ENCODE measurements at regions of chr10 and their contacts with region 1.

Region 1: GRCh38 chr10:61866700-61867368 is 34.7 kb upstream of the ARID5B start:
- DNase-seq: no peak
- ATAC-seq: no peak
- H3K4me3 Mint-ChIP-seq: peak overlapping the region; percentile 64 to 89 (median 75)
- H3K27ac Mint-ChIP-seq: peak overlapping the region in 8 of 10 donors; percentile 12 to 82 (median 76)
- H3K4me1 Mint-ChIP-seq: peaks cover 0 to 11% (median 2%) of the 10 kb centered on the region in 4 donors
- H3K27me3 Mint-ChIP-seq: no peaks in the 10 kb centered on the region

Region 2: GRCh38 chr10:61750929-61751471 is 115.8 kb before region 1 on chr10:
- POLR2A ChIA-PET with region 1: interaction called, 10 read pairs
- DNase-seq: peak; percentile 30 to 81 (median 46)
- ATAC-seq: peak; percentile 90 to 94
- H3K4me3 Mint-ChIP-seq: peak overlapping the region in 1 of 10 donors; percentile 27
- H3K27ac Mint-ChIP-seq: peak overlapping the region in 1 of 10 donors; percentile 72
- H3K4me1 Mint-ChIP-seq: peaks cover 5 to 29% (median 21%) of the 10 kb centered on the region in 4 donors
- H3K27me3 Mint-ChIP-seq: no peaks in the 10 kb centered on the region

Region 3: DNA sequence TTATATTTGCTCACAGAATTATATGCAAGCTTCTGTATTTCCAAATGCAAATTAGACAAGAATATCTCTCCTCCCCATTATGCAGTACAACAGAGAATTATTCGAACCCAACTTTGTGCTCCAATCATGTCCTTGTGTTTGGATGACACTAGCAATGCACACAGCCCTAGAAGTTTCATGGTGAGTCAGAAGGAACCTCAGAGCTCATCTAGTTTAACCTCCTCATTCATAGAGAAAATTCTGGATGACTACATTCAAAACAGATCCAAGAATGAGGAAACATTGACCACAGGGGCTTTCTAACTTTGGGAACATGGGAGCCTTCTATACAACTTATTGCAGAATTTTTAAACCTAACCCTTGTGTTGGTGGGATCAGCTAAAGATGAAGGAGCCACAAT is 21.9 kb after region 1 on chr10:
- POLR2A ChIA-PET with region 1: no interaction called
- DNase-seq: no peak
- ATAC-seq: no peak
- H3K4me3 Mint-ChIP-seq: no peak overlapping the region
- H3K27ac Mint-ChIP-seq: no peak overlapping the region
- H3K4me1 Mint-ChIP-seq: no peaks in the 10 kb centered on the region
- H3K27me3 Mint-ChIP-seq: peaks cover 0 to 5% (median 1%) of the 10 kb centered on the region in 5 donors

Region 4: GRCh38 chr10:61903221-61903927 is 36.5 kb after region 1 on chr10:
- POLR2A ChIA-PET with region 1: interaction called, 24 read pairs
- DNase-seq: peak; percentile 48 to 81 (median 62)
- ATAC-seq: peak; percentile 54 to 58
- H3K4me3 Mint-ChIP-seq: peak overlapping the region; percentile 83 to 96 (median 93)
- H3K27ac Mint-ChIP-seq: peak overlapping the region; percentile 91 to 98 (median 96)
- H3K4me1 Mint-ChIP-seq: peaks cover 9 to 50% (median 34%) of the 10 kb centered on the region in 4 donors
- H3K27me3 Mint-ChIP-seq: peaks cover 0 to 4% (median 0%) of the 10 kb centered on the region in 5 donors

Measured in naive thymus-derived CD8-positive, alpha-beta T cell (primary cell).